Thyroid gland (tissue), 4 donors: ENCODE measurements at regions of chr15 and their contacts with region 1.

Region 1: GRCh38 chr15:98838397-98839259 is 169.0 kb downstream of the PGPEP1L start:
- DNase-seq: no peak
- H3K4me3 ChIP-seq: no peak overlapping the region
- H3K27ac ChIP-seq: no peak overlapping the region
- H3K4me1 ChIP-seq: peaks cover 26 to 33% of the 10 kb centered on the region in 2 donors
- H3K27me3 ChIP-seq: no peaks in the 10 kb centered on the region
- CTCF ChIP-seq: no peak
- POLR2A ChIP-seq: no peak

Region 2: DNA sequence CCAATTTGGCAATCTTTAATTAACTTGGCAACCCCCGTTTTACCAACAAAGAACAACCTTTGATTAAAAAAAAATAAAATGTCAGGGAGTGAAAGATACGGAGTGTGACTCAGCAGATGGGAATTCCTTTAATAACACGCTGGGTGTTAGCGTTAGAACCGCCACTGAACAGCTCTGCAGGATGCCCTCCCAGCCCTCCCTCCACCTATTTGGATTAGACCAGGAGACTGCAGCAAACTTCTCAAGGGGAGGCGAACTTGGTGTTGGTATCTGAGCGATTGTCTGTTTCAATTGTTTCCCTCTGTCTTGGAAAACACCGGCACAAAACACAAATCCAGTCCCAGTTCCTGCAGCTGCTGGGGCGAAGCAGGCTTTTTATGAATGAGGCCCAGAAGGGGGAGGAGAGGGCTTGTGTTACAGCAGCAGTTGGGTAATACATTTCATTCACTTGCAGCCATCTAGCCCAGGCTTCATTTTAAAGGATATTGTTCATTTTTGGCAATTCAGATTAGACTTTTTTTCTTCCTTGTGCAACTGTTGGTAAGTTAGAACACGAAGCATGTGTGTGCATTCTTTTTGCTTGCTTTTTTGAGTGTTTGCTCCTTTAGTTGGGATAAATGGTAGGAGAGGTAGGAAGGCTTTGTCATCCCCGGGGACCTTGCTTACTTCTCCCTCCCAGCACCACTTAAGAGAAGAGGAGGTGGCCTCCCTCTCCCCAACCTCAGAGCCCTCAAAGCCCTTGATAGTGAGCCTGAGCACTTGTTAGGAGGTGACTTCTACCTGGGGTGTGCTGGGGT is 38.0 kb before region 1 on chr15:
- intact Hi-C with region 1: loop called (anchors 5 kb)
- DNase-seq: peak; percentile 53 to 64
- H3K4me3 ChIP-seq: no peak overlapping the region
- H3K27ac ChIP-seq: peak overlapping the region; percentile 16 to 59 (median 53)
- H3K4me1 ChIP-seq: peaks cover 46 to 68% of the 10 kb centered on the region in 2 donors
- H3K27me3 ChIP-seq: no peaks in the 10 kb centered on the region
- CTCF ChIP-seq: no peak
- POLR2A ChIP-seq: no peak

Region 3: DNA sequence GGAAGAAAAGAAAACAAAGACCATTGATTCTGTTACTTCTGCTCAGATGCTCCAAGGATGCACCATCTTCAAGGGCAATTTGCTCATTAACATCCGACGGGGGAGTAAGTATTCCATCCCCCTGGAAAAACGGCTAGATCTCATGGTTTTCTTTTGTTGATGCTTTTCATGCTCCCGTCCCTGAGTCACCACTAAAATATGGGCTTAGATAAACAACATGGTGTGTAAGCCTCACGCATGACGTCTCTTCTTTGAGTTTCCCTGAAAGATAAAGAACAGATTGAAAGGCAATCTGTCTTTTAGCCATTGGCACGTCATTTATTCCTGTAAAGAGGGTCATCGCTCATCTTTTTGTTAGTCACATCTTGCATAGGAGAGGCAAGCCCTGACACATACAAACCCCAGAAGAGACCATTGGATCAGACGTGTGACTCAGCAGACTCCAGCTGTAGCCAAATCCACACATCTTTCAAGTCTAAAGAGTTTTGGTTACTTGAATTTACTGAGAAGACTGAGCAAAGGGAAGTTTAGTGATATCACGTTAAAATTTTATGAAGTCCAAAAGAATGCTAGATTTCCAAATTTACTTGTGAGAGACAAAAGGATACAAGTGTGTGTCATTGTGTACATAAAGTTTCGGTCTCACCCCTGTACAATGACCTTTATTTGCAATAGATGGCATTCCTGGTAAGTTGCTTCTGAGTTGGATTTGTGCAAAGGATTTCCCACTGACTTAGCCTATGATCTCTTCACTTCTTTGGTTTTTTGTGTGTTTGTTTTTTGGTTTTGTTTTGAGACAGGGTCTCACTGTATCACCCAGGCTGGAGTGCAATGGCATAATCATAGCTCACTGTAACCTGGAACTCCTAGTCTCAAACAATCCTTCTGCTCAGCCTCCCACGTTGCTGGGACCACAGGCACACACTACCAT is 58.4 kb after region 1 on chr15:
- intact Hi-C with region 1: no loop called
- DNase-seq: no peak
- H3K4me3 ChIP-seq: no peak overlapping the region
- H3K27ac ChIP-seq: peak overlapping the region; percentile 3 to 82 (median 78)
- H3K4me1 ChIP-seq: peaks cover 21 to 37% of the 10 kb centered on the region in 2 donors
- H3K27me3 ChIP-seq: no peaks in the 10 kb centered on the region
- CTCF ChIP-seq: no peak
- POLR2A ChIP-seq: no peak